OCI-LY7 (cell line): ENCODE measurements at regions of chr13 and their contacts with region 1.

Region 1: DNA sequence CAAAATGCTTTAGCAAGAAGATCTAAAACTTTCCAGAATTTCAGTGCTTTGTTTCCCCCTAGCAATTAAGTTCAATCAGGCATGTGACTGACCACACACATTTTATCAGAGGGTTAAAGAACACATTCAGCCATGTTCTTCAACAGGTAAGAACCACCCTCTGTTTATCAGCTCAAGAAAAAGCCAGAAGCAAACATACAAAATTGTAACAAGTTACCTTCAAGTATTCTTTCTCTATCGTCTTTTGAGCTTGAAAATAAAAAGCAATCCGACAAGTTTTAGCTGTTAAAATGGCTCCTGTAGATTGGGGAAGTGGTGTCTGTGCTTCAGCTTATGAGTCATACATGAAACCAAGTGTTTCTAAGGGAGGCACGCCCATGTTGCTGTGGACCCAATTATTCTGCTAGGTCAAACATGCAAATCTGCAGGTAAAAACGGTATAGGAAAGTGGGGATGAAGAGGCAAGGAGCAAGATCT is at the start of gene ELF1:
- DNase-seq: peak; percentile 95
- H3K4me3 ChIP-seq: peak within 1 kb of the TSS; percentile 84
- H3K27ac ChIP-seq: peak within 1 kb of the TSS; percentile 94
- H3K4me1 ChIP-seq: peaks cover 49% of the 10 kb centered on the region
- CTCF ChIP-seq: no peak
- total RNA-seq, gene ELF1: 106 and 111 TPM in 2 replicates

Region 2: GRCh38 chr13:40963919-40964318 is 55.1 kb before region 1 on chr13:
- CTCF ChIA-PET with region 1: no interaction called
- POLR2A ChIA-PET with region 1: interaction called, 14 read pairs
- intact Hi-C with region 1: no loop called
- DNase-seq: no peak
- H3K4me3 ChIP-seq: no peak overlapping the region
- H3K27ac ChIP-seq: peak overlapping the region; percentile 24
- H3K4me1 ChIP-seq: peaks cover 85% of the 10 kb centered on the region
- CTCF ChIP-seq: no peak

Region 3: GRCh38 chr13:40974460-40975407 is 44.3 kb before region 1 on chr13:
- CTCF ChIA-PET with region 1: interaction called, 3 read pairs
- POLR2A ChIA-PET with region 1: interaction called, 86 read pairs
- intact Hi-C with region 1: no loop called
- DNase-seq: peak; percentile 78
- H3K4me3 ChIP-seq: peak overlapping the region; percentile 85
- H3K27ac ChIP-seq: peak overlapping the region; percentile 64
- H3K4me1 ChIP-seq: peaks cover 82% of the 10 kb centered on the region
- CTCF ChIP-seq: peak; percentile 86

Region 4: DNA sequence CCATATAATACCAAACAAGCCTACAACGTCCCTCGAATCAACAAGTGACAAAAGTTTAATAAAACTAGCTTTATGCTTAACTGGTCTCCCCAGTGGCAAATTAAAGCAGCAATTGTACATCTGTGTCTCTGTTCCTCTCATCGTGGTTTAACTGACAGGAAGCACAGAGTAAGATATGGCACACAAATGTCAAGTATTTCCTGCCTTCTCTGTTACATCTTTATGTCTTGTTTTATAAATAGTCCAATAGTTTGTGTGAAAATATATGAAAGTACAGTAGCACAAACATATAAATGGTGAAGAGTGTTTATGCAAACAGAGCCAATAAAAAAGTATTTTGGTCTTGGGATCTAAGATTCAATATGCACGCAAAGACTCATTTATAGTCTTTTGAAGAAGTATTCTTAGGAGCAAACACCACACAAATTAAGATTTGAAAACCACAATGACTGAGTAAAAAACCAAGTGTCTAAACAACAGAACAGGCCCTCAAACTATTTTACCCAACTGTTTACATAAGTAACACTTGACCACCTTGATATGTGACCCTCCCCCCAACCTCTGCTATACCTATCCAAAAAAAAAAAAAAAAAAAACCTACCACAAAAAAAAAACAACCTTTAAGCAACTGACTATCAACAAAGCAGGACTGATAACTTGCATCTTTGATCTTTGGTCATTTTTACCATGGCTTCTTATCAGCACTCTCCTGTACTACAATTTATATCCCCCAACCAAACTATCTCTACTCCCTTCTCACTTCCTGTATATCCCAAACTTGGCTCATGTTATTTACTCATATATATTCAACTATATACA is 14.0 kb before region 1 on chr13:
- CTCF ChIA-PET with region 1: interaction called, 4 read pairs
- POLR2A ChIA-PET with region 1: interaction called, 152 read pairs
- intact Hi-C with region 1: loop called (anchors 1 kb)
- DNase-seq: peak; percentile 89
- H3K4me3 ChIP-seq: peak overlapping the region; percentile 64
- H3K27ac ChIP-seq: peak overlapping the region; percentile 99
- H3K4me1 ChIP-seq: peaks cover 95% of the 10 kb centered on the region
- CTCF ChIP-seq: no peak

Region 5: GRCh38 chr13:41029629-41030028 is 10.6 kb after region 1 on chr13:
- CTCF ChIA-PET with region 1: no interaction called
- POLR2A ChIA-PET with region 1: interaction called, 22 read pairs
- intact Hi-C with region 1: no loop called
- DNase-seq: no peak
- H3K4me3 ChIP-seq: no peak overlapping the region
- H3K27ac ChIP-seq: no peak overlapping the region
- H3K4me1 ChIP-seq: peaks cover 41% of the 10 kb centered on the region
- CTCF ChIP-seq: peak; percentile 67

Region 6: GRCh38 chr13:41054212-41054877 is 35.3 kb after region 1 on chr13:
- CTCF ChIA-PET with region 1: no interaction called
- POLR2A ChIA-PET with region 1: interaction called, 46 read pairs
- intact Hi-C with region 1: no loop called
- DNase-seq: peak; percentile 84
- H3K4me3 ChIP-seq: peak overlapping the region; percentile 64
- H3K27ac ChIP-seq: peak overlapping the region; percentile 75
- H3K4me1 ChIP-seq: peaks cover 94% of the 10 kb centered on the region
- CTCF ChIP-seq: peak; percentile 94

Region 7: DNA sequence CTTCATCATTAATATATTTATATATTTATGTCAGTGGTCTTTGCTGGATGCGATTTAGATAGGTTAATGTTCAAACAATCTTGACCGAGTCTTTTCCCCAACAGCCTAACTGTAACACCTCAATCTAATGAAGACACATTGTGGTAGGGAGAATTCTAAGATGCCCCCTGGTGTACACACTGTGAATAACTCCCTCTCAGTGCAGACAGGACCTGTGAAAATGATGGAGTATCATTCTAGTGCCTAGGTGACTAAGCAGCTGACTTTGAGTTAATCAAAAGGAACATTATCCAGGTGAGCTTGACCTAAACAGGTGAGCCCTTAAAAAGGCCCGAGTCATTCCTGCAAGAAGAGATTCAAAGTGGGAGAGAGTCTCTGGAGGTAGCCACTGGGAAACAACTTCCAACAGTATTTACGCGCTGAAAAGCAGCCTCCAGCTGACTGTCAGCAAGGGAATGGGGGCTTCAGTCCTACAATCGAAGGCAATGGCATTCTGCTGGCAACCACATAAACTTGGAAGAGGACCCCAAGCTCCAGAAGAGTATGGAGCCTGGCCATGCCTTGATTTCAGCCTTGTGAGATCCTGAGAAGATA is 203.3 kb after region 1 on chr13:
- CTCF ChIA-PET with region 1: no interaction called
- POLR2A ChIA-PET with region 1: no interaction called
- intact Hi-C with region 1: no loop called
- DNase-seq: peak; percentile 63
- H3K4me3 ChIP-seq: no peak overlapping the region
- H3K27ac ChIP-seq: no peak overlapping the region
- H3K4me1 ChIP-seq: no peaks in the 10 kb centered on the region
- CTCF ChIP-seq: peak; percentile 88